Thyroid gland (tissue), 4 donors: ENCODE measurements at regions of chr13 and their contacts with region 1.

Region 1: DNA sequence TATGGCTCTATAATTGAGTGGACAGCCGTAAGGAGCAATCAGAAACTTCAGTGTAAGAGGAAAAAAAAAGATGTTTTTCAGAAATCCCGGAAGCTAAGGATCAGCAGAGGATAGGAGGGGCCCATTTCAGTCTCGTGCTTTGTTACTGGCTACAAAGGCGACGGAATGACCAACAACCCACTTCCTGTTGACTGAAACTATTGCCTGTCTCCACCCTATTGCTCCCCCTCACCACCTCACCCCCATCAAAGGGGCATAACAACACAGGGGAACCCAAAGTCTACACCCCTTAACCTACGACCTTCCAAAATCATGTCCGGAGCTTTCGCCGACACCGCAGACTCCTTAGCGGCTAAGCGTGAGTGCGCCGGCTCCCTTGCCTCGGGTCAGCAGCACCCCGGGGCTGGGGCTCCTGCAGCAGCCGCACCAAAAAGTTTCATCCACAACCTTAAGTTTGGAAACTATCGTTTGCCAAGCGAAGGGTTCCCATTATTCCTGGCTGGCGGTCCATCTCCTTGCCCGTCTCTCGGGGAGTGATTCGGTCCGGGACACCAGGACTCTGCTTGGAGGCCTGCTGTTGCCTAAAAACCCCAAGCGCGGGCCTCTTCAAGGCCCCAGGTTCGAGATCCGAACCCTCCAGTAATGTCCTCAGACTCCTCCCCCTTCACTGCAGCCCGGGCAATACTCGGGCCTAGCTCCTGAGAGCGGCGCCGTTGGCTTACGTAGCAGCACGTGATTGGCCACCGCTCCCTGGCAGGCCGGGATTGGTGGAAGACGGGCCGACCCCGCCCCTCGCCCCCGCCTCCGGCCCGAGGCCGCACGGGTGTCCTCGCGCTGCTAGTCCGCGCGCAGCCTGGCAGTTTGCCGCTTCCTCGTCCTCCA is at the start of gene TPP2:
- DNase-seq: peak; percentile 99
- H3K4me3 ChIP-seq: peak within 1 kb of the TSS; percentile 61 to 99 (median 79)
- H3K27ac ChIP-seq: peak within 1 kb of the TSS; percentile 97 to 99 (median 97)
- H3K4me1 ChIP-seq: peaks cover 28 to 36% of the 10 kb centered on the region in 2 donors
- H3K27me3 ChIP-seq: no peaks in the 10 kb centered on the region
- CTCF ChIP-seq: no peak
- POLR2A ChIP-seq: peak in 1 of 2 donors; percentile 92
- total RNA-seq, gene TPP2: 77.3 to 229 (median 99.1) TPM

Region 2: DNA sequence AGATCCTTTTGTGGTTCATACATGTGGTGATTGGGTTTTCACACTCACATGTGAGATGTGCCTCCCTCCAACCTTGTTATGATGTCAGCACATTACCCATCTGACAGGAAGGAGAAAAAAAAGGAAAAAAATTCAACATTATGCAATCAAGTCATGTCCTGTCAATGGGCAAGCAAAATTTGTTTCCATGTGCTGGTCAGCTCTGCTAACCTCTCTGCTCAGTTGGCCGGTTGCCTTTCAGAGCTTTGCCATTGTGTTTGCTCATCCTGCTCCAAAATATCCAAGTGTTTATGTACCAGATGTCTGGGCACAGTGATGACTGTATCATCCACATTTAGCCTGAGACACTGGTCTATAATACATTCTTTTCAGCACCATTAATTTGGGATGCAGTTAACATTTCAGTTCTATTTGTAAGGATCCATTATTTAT is 125.4 kb after region 1 on chr13:
- intact Hi-C with region 1: no loop called
- DNase-seq: no peak
- H3K4me3 ChIP-seq: no peak overlapping the region
- H3K27ac ChIP-seq: no peak overlapping the region
- H3K4me1 ChIP-seq: no peaks in the 10 kb centered on the region
- H3K27me3 ChIP-seq: no peaks in the 10 kb centered on the region
- CTCF ChIP-seq: no peak
- POLR2A ChIP-seq: no peak

Region 3: GRCh38 chr13:102798581-102799425 is 202.4 kb after region 1 on chr13 and contains the starts of genes BIVM and POGLUT2:
- intact Hi-C with region 1: loop called (anchors 5 kb)
- DNase-seq: peak; percentile 89 to 93
- H3K4me3 ChIP-seq: peak within 1 kb of the TSS; percentile 37 to 77 (median 66)
- H3K27ac ChIP-seq: peak within 1 kb of the TSS; percentile 10 to 76 (median 69)
- H3K4me1 ChIP-seq: peaks cover 0 to 10% of the 10 kb centered on the region in 2 donors
- H3K27me3 ChIP-seq: no peaks in the 10 kb centered on the region
- CTCF ChIP-seq: no peak
- POLR2A ChIP-seq: peak in 1 of 2 donors; percentile 27
- total RNA-seq, gene BIVM: 16.5 to 27.2 (median 25.5) TPM
- total RNA-seq, gene POGLUT2: 2.8 to 10.2 (median 3.5) TPM

Region 4: GRCh38 chr13:102845630-102846260 is 249.4 kb after region 1 on chr13 and contains the start of gene ERCC5:
- intact Hi-C with region 1: loop called (anchors 5 kb)
- DNase-seq: peak; percentile 93 to 94
- H3K4me3 ChIP-seq: peak within 1 kb of the TSS; percentile 43 to 85 (median 49)
- H3K27ac ChIP-seq: peak within 1 kb of the TSS; percentile 74 to 98 (median 95)
- H3K4me1 ChIP-seq: peaks cover 7 to 16% of the 10 kb centered on the region in 2 donors
- H3K27me3 ChIP-seq: no peaks in the 10 kb centered on the region
- CTCF ChIP-seq: peak in 1 of 6 experiments; percentile 26
- POLR2A ChIP-seq: peak; percentile 13 to 77
- total RNA-seq, gene ERCC5: 57.2 to 119 (median 102) TPM